MCF 10A (cell line): ENCODE measurements at regions of chr12 and their contacts with region 1.

Region 1: GRCh38 chr12:47212701-47213039 is 132.9 kb upstream of the AMIGO2 start:
- DNase-seq: no peak
- H3K4me3 Mint-ChIP-seq: no peak overlapping the region
- H3K27ac Mint-ChIP-seq: no peak overlapping the region
- H3K4me1 Mint-ChIP-seq: peaks cover 23% of the 10 kb centered on the region
- H3K27me3 Mint-ChIP-seq: no peaks in the 10 kb centered on the region
- CTCF ChIP-seq: no peak

Region 2: GRCh38 chr12:47270782-47271664 is 58.4 kb after region 1 on chr12:
- CTCF ChIA-PET with region 1: interaction called, 4 read pairs
- POLR2A ChIA-PET with region 1: interaction called, 8 read pairs
- intact Hi-C with region 1: loop called (anchors 2 kb)
- DNase-seq: peak; percentile 87
- H3K4me3 Mint-ChIP-seq: peak overlapping the region; percentile 33
- H3K27ac Mint-ChIP-seq: peak overlapping the region; percentile 87
- H3K4me1 Mint-ChIP-seq: peaks cover 61% of the 10 kb centered on the region
- H3K27me3 Mint-ChIP-seq: no peaks in the 10 kb centered on the region
- CTCF ChIP-seq: no peak

Region 3: GRCh38 chr12:47307680-47308399 is 95.2 kb after region 1 on chr12:
- CTCF ChIA-PET with region 1: interaction called, 3 read pairs
- POLR2A ChIA-PET with region 1: no interaction called
- intact Hi-C with region 1: loop called (anchors 1 kb)
- DNase-seq: peak; percentile 75
- H3K4me3 Mint-ChIP-seq: no peak overlapping the region
- H3K27ac Mint-ChIP-seq: no peak overlapping the region
- H3K4me1 Mint-ChIP-seq: peaks cover 11% of the 10 kb centered on the region
- H3K27me3 Mint-ChIP-seq: no peaks in the 10 kb centered on the region
- CTCF ChIP-seq: peak; percentile 73